ENCODE measurements at regions of chr5 and their contacts with region 1.

Region 1: GRCh38 chr5:96536991-96537785 is 104.1 kb upstream of the PCSK1 start:
- DNase-seq: no peak
- H3K4me3 ChIP-seq: no peak overlapping the region
- H3K27ac ChIP-seq: no peak overlapping the region
- H3K27me3 ChIP-seq: no peaks in the 10 kb centered on the region
- CTCF ChIP-seq: no peak

Region 2: GRCh38 chr5:96391921-96392320 is 145.3 kb before region 1 on chr5:
- CTCF ChIA-PET with region 1: interaction called, 10 read pairs
- POLR2A ChIA-PET with region 1: no interaction called
- DNase-seq: no peak
- H3K4me3 ChIP-seq: no peak overlapping the region
- H3K27ac ChIP-seq: no peak overlapping the region
- H3K27me3 ChIP-seq: peaks cover 3% of the 10 kb centered on the region
- CTCF ChIP-seq: no peak

Measured in AG04450 (cell line).